ENCODE measurements at regions of chr19 and their contacts with region 1.

Region 1: DNA sequence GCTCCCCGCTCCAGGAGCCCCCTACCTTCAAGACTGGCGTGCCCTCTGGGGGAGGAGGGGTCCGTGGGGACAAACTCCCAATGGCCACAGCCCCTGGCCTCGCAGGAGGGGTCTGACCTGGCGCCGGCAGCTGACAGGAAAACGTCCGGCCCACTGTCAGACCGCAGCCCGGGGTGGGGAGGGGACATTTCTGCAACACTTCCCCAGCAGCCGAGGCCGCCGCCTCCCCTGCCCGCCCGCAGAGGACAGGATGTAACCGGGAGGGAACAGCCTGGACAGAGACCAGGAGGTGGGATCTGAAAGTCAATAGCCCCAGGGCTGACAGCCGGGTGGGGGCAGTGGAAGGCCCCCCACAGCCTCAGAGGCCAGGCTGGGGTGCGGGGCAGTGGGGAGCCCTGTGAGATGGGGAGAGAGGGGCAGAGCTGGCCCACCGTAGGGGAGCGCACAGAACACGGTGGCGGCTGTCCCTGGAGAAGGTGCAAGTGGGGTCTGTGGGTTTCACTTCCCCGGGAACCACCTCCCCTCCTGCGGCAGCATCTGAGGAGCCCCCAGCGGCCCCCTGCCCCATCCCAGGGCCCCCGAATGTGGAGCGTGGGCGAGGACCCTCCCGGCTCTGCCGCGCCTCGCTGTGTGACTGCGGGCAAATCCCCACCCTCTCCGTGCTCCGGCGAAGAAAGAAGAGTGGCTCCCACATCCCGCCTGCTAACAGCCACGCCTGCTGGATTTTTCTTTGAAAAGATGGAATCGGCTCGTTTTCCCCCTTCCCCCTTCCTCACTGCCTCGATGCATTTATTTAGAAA is at the start of gene PEAK3:
- DNase-seq: peak; percentile 50 to 85 (median 65)
- H3K4me3 ChIP-seq: peak within 1 kb of the TSS in 2 of 4 donors; percentile 19 to 28
- H3K27ac ChIP-seq: peak within 1 kb of the TSS in 2 of 5 donors; percentile 34 to 79
- H3K4me1 ChIP-seq: no peaks in the 10 kb centered on the region
- H3K27me3 ChIP-seq: peaks cover 4% of the 10 kb centered on the region
- CTCF ChIP-seq: no peak
- POLR2A ChIP-seq: no peak
- total RNA-seq, gene PEAK3: 0.43 to 3.2 (median 1.5) TPM in 8 of 9 donors, not detected in the other

Region 2: DNA sequence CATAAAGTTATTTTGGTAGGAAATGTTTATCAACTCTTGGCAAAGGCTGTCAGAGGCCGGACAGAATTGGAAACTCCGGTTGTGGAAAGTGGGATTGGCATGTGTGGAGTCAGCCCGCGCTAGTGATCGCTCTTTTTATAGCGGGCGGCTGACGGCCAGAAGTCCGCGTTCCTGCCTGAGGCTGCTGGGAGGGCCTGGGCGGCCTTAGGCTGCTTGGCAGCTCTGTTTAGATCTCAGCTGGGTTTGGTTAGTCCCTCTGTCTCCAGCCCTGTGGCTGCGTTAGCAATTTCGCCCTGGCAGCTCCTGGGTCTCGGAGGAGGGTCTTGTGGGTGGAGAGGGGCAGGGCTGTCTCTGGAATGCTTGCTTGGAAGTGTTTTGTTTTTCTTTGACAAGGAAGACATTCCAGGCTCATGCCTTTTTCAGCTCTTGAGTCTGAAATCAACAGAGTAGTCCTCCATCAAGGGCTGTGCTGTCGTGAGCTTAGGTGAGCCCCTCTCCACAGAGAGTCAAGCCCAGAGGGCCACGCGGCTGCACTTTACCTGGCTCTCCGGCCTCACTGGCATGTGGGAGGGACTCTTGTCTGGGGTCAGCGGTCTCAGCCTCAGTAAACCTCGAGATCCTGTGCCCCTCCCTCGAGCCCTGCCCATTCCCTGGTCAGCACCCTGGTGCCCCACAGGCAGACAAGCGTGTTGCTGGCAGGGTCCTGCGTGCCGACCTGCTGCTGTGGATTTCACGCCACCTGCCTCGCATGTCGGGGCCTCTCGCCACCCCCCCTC is 96.0 kb before region 1 on chr19:
- intact Hi-C with region 1: no loop called
- DNase-seq: peak in 5 of 7 donors; percentile 47 to 81 (median 57)
- H3K4me3 ChIP-seq: no peak overlapping the region
- H3K27ac ChIP-seq: peak overlapping the region in 2 of 5 donors; percentile 30 to 79
- H3K4me1 ChIP-seq: peaks cover 4 to 12% of the 10 kb centered on the region in 2 donors
- H3K27me3 ChIP-seq: no peaks in the 10 kb centered on the region
- CTCF ChIP-seq: no peak
- POLR2A ChIP-seq: no peak

Region 3: DNA sequence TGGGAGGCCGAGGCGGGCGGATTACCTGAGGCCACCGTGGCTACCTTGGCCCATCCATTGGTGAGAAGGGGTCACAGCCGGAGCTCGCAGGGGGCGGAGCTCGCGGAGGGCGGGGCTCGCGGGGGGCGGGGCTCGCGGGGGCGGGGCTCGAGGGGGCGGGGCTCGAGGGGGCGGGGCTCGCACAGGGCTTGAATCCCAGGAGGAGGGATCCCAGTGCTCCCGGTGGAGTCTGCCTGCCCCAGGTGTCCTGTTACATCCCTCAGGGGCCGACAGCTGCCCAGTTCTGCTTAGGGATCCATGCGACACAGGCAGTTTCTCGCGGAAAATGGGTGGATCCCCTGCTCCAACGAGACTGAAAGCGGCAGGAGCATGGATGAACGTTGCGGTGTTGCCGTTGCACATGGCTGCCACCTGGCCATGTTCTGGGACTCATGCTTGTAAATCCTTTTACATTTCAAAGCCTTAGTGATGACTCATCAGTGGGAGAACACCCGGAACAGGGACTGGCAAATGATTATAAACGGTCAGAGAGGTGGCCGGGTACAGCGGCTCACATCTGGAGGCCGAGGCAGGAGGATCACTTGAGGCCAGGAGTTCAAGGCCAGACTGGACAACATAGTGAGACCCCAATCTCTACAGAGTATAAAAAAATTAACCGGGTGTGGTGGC is 102.9 kb after region 1 on chr19:
- intact Hi-C with region 1: loop called (anchors 5 to 10 kb)
- DNase-seq: peak; percentile 38 to 78 (median 66)
- H3K4me3 ChIP-seq: no peak overlapping the region
- H3K27ac ChIP-seq: peak overlapping the region in 1 of 5 donors; percentile 63
- H3K4me1 ChIP-seq: no peaks in the 10 kb centered on the region
- H3K27me3 ChIP-seq: no peaks in the 10 kb centered on the region
- CTCF ChIP-seq: no peak
- POLR2A ChIP-seq: no peak

Measured in adrenal gland (tissue), 19 donors.